ENCODE measurements at regions of chr1 and their contacts with region 1.

Region 1: DNA sequence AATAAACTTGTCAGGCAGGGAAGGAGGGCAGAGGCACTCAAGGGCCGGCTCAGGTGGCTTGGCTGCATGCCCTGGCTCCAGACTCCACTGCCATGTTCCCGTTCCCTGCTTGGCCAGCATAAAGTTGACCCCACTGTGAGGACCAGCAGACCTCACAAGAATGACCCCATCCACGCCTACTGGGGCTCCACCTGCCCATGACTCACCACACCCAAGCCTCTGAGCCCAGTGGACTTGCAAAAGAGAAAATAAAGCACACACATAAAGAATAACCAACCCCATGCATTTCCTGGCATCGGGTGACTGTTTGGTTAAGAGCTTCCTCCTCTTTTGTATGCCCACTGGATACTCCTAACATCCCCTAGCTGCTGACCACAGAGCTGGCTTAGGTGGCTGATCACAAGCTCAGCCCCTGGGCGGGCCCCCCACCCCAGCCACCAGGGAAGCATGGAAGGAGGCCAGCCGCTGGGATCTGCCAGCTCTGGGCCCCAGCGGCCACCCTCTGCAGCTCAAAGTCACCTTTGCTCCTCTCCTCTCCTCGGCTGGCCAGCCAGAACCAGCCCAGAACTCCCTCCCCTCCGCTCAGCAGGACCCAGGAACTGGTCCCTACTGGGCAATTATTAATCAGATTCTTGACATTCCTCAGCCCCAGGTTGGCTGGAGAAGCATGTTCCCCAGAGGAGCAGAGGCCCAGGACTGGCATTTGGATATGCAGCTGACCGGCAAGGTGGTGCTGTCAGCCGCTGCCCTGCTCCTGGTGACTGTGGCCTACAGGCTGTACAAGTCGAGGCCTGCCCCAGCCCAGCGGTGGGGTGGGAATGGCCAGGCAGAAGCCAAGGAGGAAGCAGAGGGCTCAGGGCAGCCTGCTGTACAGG is at the start of gene KLHDC7A:
- DNase-seq: peak; percentile 28
- H3K4me3 ChIP-seq: peak within 1 kb of the TSS; percentile 52
- H3K27ac ChIP-seq: peak within 1 kb of the TSS; percentile 93
- H3K4me1 ChIP-seq: peaks cover 64% of the 10 kb centered on the region
- CTCF ChIP-seq: no peak
- total RNA-seq, gene KLHDC7A: 2.6 and 3.5 TPM in 2 replicates

Region 2: DNA sequence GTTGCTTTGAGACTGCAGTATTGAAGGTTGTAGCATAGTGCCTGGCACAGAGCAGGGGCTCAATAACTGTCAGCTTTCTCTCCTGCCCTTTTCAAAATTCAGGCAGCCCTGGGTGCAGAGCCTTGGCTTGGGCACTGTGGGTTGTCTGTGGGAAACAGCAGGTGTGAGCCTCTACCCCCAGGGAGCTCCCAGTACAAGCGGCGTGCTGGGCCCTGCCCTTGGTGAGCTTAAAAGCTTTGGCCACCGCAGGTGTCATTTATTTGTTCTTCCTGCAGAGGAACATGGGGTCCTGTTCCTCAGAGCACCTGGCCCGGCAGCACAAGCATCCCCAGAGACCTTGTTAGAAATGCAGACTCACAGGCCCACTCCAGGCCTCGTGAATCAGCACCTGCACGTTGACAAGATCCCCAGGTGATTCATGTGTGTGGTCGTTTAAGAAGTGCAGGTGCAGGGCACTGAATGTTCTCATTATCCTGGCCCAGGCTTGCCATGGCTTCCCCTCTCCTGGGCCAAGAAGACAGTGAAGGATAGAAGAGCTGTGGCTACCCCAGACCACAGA is 402.8 kb before region 1 on chr1:
- CTCF ChIA-PET with region 1: no interaction called
- POLR2A ChIA-PET with region 1: no interaction called
- intact Hi-C with region 1: loop called (anchors 5 kb)
- DNase-seq: peak; percentile 82
- H3K4me3 ChIP-seq: no peak overlapping the region
- H3K27ac ChIP-seq: no peak overlapping the region
- H3K4me1 ChIP-seq: peaks cover 19% of the 10 kb centered on the region
- CTCF ChIP-seq: no peak

Region 3: DNA sequence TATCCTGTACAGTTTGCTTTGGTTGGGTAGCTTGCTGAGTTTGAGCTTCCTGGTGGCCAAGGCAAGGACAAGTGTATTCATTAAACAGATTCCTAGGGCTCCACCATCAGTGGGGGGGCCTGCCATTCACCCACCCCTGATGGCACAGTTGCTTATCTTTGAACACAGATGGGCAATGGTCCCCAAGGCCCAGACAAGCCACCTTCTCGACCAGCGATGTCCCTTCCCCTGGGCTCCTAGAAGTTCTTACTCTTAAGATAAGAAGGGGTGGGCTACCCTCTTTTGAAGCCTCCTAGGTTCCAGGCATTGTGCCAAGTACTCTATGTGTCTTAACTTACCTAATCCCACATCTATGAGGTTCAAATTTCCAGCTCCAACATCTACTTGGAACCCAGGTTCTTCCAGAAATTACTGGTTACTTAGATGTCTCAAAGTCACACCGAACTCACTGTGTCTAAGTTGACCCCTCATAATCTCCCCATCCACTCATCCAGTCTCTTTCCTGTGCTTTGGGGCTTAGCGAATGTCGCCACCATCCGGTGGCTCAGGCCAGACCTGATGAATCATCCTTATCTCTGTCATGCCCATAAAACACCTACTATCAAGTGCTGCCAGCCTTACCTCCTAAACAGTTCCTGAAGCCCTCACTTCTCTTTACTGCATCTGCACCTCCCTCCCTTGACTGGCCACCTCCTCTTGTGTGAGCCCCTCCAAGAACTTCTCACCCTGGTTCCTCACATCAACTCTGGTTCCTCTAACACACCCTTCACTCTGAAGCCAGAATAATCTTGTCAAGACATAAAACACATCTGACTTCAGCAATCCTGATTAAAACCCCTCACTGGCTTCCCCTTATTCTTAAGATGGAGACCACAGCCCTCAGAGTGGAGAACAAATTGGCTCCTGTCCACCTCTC is 50.3 kb after region 1 on chr1:
- CTCF ChIA-PET with region 1: no interaction called
- POLR2A ChIA-PET with region 1: interaction called, 4 read pairs
- intact Hi-C with region 1: loop called (anchors 2 kb)
- DNase-seq: peak; percentile 60
- H3K4me3 ChIP-seq: no peak overlapping the region
- H3K27ac ChIP-seq: no peak overlapping the region
- H3K4me1 ChIP-seq: peaks cover 46% of the 10 kb centered on the region
- CTCF ChIP-seq: peak; percentile 89

Region 4: GRCh38 chr1:18569811-18570545 is 89.4 kb after region 1 on chr1:
- CTCF ChIA-PET with region 1: no interaction called
- POLR2A ChIA-PET with region 1: no interaction called
- intact Hi-C with region 1: loop called (anchors 5 kb)
- DNase-seq: no peak
- H3K4me3 ChIP-seq: no peak overlapping the region
- H3K27ac ChIP-seq: no peak overlapping the region
- H3K4me1 ChIP-seq: peaks cover 22% of the 10 kb centered on the region
- CTCF ChIP-seq: no peak

Region 5: DNA sequence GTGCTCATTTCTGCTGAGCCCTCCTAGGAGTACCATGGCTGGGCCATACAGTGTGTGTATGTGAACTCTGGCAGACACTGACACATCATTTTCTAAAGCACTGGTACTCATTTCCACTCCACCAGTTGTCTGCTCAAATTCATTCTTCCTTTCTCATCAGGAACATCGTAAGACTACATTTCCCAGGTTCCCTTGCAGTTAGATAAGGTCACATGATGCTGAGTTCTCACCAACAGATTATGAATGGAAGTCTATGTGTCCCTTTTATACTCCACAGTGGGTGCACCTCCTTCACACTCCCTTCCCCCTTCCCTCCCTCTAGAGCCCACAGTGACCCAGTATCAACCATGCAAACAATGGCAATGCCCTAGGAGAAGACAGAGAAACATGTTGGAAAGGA is 111.8 kb after region 1 on chr1:
- CTCF ChIA-PET with region 1: no interaction called
- POLR2A ChIA-PET with region 1: no interaction called
- intact Hi-C with region 1: no loop called
- DNase-seq: peak; percentile 24
- H3K4me3 ChIP-seq: no peak overlapping the region
- H3K27ac ChIP-seq: no peak overlapping the region
- H3K4me1 ChIP-seq: no peaks in the 10 kb centered on the region
- CTCF ChIP-seq: no peak

Region 6: GRCh38 chr1:19815801-19816736 is 1335.5 kb after region 1 on chr1:
- CTCF ChIA-PET with region 1: no interaction called
- POLR2A ChIA-PET with region 1: no interaction called
- intact Hi-C with region 1: loop called (anchors 5 kb)
- DNase-seq: peak; percentile 94
- H3K4me3 ChIP-seq: no peak overlapping the region
- H3K27ac ChIP-seq: peak overlapping the region; percentile 56
- H3K4me1 ChIP-seq: peaks cover 24% of the 10 kb centered on the region
- CTCF ChIP-seq: no peak